ENCODE measurements at regions of chr12 and their contacts with region 1.

Region 1: GRCh38 chr12:42568952-42569915 is 20.3 kb downstream of the PRICKLE1 start:
- ATAC-seq: peak in 7 of 8 experiments; percentile 10 to 79 (median 66)
- H3K4me3 ChIP-seq: no peak overlapping the region
- H3K27ac ChIP-seq: no peak overlapping the region
- H3K4me1 ChIP-seq: no peaks in the 10 kb centered on the region

Region 2: DNA sequence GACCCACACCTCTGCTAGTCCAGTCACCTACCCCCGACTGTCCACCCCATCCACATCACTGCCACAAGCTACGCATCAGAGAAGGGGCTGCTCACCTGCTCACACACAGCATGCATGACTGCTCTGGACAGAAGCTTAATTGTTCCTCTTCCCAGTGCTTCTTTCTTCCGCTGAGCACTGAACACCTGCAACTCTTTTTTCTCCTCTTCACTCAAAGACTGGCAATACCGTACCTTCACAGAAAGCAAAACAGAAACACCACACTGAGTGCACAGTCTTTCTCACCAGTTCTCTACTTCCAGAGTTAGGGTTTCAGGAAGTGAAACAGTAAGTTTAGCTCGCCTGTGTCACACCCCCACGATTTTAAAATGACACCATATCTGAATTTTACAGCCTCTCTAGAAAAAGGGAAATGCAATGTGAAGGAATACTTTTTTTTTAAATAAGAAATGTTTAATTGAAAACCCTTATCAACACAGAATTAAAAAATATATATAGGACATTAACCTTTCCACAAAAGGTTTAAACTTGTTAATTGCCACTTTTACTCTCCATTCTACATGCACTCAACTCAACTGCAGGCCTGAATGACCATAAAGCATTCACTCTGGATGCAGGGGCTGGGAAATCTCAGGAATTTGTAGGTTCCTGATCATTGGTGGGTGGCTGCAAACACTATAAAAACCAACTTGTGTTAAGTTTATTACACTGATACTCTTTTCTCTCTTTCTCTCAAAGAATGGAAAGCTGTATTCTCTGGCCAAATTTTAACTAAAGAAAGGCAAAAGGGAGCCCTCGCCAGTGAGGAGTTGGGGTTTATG is 99.7 kb before region 1 on chr12:
- in situ Hi-C with region 1: loop called in 1 of 9 experiments (anchors 25 kb)
- ATAC-seq: no peak
- H3K4me3 ChIP-seq: no peak overlapping the region
- H3K27ac ChIP-seq: no peak overlapping the region
- H3K4me1 ChIP-seq: peaks cover 0 to 11% of the 10 kb centered on the region in 2 donors

Region 3: GRCh38 chr12:42741771-42742510 is 172.7 kb after region 1 on chr12:
- in situ Hi-C with region 1: no loop called
- ATAC-seq: peak in 6 of 8 experiments; percentile 44 to 90 (median 67)
- H3K4me3 ChIP-seq: no peak overlapping the region
- H3K27ac ChIP-seq: no peak overlapping the region
- H3K4me1 ChIP-seq: peaks cover 2% of the 10 kb centered on the region in 2 donors